Activated B cell treated with CpG ODN at 0.5 μM for 24 hours (primary cell): ENCODE measurements at regions of chr19 and their contacts with region 1.

Region 1: GRCh38 chr19:2151339-2152229 is at the start of gene AP3D1:
- DNase-seq: peak; percentile 99
- ATAC-seq: peak; percentile 92
- H3K4me3 Mint-ChIP-seq: peak within 1 kb of the TSS; percentile 83
- H3K27ac Mint-ChIP-seq: peak within 1 kb of the TSS; percentile 70
- H3K4me1 Mint-ChIP-seq: peaks cover 41% of the 10 kb centered on the region
- H3K27me3 Mint-ChIP-seq: no peaks in the 10 kb centered on the region
- CTCF ChIP-seq: no peak
- total RNA-seq, gene AP3D1: 97.2 and 109 TPM in 2 replicates

Region 2: GRCh38 chr19:1952635-1953034 is 198.9 kb before region 1 on chr19:
- CTCF ChIA-PET with region 1: no interaction called
- POLR2A ChIA-PET with region 1: no interaction called
- intact Hi-C with region 1: no loop called
- DNase-seq: no peak
- ATAC-seq: no peak
- H3K4me3 Mint-ChIP-seq: no peak overlapping the region
- H3K27ac Mint-ChIP-seq: no peak overlapping the region
- H3K4me1 Mint-ChIP-seq: peaks cover 25% of the 10 kb centered on the region
- H3K27me3 Mint-ChIP-seq: no peaks in the 10 kb centered on the region
- CTCF ChIP-seq: no peak

Region 3: GRCh38 chr19:2016041-2016807 is 135.4 kb before region 1 on chr19:
- CTCF ChIA-PET with region 1: interaction called, 5 read pairs
- POLR2A ChIA-PET with region 1: no interaction called
- intact Hi-C with region 1: loop called (anchors 1 kb)
- DNase-seq: no peak
- ATAC-seq: peak; percentile 73
- H3K4me3 Mint-ChIP-seq: peak overlapping the region; percentile 60
- H3K27ac Mint-ChIP-seq: peak overlapping the region; percentile 56
- H3K4me1 Mint-ChIP-seq: peaks cover 29% of the 10 kb centered on the region
- H3K27me3 Mint-ChIP-seq: no peaks in the 10 kb centered on the region
- CTCF ChIP-seq: no peak

Region 4: GRCh38 chr19:2168619-2169424 is 17.2 kb after region 1 on chr19:
- CTCF ChIA-PET with region 1: interaction called, 8 read pairs
- POLR2A ChIA-PET with region 1: interaction called, 8 read pairs
- intact Hi-C with region 1: loop called (anchors 1 kb)
- DNase-seq: peak; percentile 74
- ATAC-seq: peak; percentile 49
- H3K4me3 Mint-ChIP-seq: peak overlapping the region; percentile 84
- H3K27ac Mint-ChIP-seq: peak overlapping the region; percentile 92
- H3K4me1 Mint-ChIP-seq: peaks cover 84% of the 10 kb centered on the region
- H3K27me3 Mint-ChIP-seq: no peaks in the 10 kb centered on the region
- CTCF ChIP-seq: no peak

Region 5: GRCh38 chr19:2223959-2224358 is 72.4 kb after region 1 on chr19:
- CTCF ChIA-PET with region 1: interaction called, 6 read pairs
- POLR2A ChIA-PET with region 1: no interaction called
- intact Hi-C with region 1: loop called (anchors 1 kb)
- DNase-seq: peak; percentile 67
- ATAC-seq: peak; percentile 89
- H3K4me3 Mint-ChIP-seq: peak overlapping the region; percentile 48
- H3K27ac Mint-ChIP-seq: peak overlapping the region; percentile 87
- H3K4me1 Mint-ChIP-seq: peaks cover 37% of the 10 kb centered on the region
- H3K27me3 Mint-ChIP-seq: no peaks in the 10 kb centered on the region
- CTCF ChIP-seq: no peak

Region 6: DNA sequence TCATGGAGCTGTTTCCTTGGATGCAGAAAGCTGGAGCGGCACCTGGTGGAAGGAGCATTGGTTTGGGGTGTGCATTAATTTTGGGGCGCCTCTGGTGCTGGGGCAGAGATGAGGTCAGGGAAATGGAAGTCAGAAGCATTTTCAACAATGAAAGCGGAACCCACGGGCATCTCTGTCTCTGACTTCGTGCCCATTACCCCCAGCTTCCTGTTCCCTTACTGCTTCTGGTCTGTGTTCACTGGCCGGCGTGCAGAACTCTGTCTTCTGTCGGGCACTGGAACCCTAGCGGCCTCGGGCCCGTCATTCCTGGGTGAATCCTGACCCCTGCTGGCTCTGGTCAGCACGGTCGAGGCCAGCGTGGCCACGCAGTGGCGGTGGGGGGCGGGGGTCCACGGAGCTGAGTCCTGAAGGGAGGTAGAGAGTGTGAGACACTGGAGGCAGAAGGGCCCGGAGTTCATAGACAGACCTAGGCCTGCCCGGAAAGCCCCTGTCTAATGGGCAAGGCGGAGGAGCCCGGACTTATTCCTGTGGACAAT is 164.3 kb after region 1 on chr19:
- CTCF ChIA-PET with region 1: interaction called, 7 read pairs
- POLR2A ChIA-PET with region 1: no interaction called
- intact Hi-C with region 1: loop called (anchors 1 kb)
- DNase-seq: peak; percentile 54
- ATAC-seq: peak; percentile 74
- H3K4me3 Mint-ChIP-seq: peak overlapping the region; percentile 59
- H3K27ac Mint-ChIP-seq: peak overlapping the region; percentile 82
- H3K4me1 Mint-ChIP-seq: peaks cover 55% of the 10 kb centered on the region
- H3K27me3 Mint-ChIP-seq: no peaks in the 10 kb centered on the region
- CTCF ChIP-seq: no peak

Region 7: DNA sequence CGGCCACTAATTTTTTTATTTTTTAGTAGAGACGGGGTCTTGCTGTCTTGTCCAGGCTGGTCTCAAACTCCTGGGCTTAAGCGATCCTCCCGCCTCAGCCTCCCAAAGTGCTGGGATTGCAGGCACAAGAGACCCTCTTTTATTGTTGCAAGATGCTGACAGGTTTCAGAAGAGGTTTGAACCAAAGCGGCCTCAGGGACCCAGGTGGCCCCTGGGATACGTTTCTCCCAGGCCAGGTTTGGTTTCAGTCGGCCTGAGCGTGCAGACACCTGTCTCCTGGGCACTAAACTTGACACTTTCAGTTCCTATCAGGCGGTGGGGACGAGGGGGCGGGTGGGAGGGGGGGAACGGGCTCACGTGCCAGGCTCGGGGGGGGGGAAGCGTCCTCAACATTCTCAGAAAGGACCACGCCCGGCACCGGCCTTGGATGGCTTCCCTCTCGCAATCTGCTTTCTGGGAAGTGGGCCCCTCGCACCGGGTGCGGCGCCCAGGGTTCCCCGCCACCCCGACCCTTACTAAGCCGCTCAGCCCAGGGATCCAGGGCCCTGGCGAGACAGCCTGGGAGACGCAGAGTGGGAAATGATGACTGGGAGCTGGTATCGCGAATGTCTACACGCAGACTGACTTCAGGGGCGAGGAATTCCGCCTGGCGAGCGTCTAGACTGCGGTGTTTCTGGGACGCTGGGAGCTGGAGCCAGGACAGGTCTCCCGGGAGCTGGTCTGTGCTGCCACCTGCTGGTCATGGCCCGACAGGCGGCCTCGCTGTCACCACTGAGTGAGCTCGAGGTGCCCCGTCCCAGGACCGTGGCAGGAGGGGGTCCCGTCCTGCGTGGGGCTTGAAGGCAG is 459.3 kb after region 1 on chr19:
- CTCF ChIA-PET with region 1: no interaction called
- POLR2A ChIA-PET with region 1: interaction called, 12 read pairs
- intact Hi-C with region 1: no loop called
- DNase-seq: peak; percentile 89
- ATAC-seq: peak; percentile 43
- H3K4me3 Mint-ChIP-seq: peak overlapping the region; percentile 89
- H3K27ac Mint-ChIP-seq: peak overlapping the region; percentile 94
- H3K4me1 Mint-ChIP-seq: peaks cover 86% of the 10 kb centered on the region
- H3K27me3 Mint-ChIP-seq: no peaks in the 10 kb centered on the region
- CTCF ChIP-seq: peak; percentile 52

Region 8: GRCh38 chr19:2798733-2799132 is 647.1 kb after region 1 on chr19:
- CTCF ChIA-PET with region 1: no interaction called
- POLR2A ChIA-PET with region 1: no interaction called
- intact Hi-C with region 1: no loop called
- DNase-seq: no peak
- ATAC-seq: no peak
- H3K4me3 Mint-ChIP-seq: no peak overlapping the region
- H3K27ac Mint-ChIP-seq: no peak overlapping the region
- H3K4me1 Mint-ChIP-seq: no peaks in the 10 kb centered on the region
- H3K27me3 Mint-ChIP-seq: no peaks in the 10 kb centered on the region
- CTCF ChIP-seq: no peak

Region 9: GRCh38 chr19:2820112-2820702 is 668.6 kb after region 1 on chr19:
- CTCF ChIA-PET with region 1: no interaction called
- POLR2A ChIA-PET with region 1: no interaction called
- intact Hi-C with region 1: no loop called
- DNase-seq: no peak
- ATAC-seq: no peak
- H3K4me3 Mint-ChIP-seq: peak overlapping the region; percentile 83
- H3K27ac Mint-ChIP-seq: no peak overlapping the region
- H3K4me1 Mint-ChIP-seq: peaks cover 14% of the 10 kb centered on the region
- H3K27me3 Mint-ChIP-seq: no peaks in the 10 kb centered on the region
- CTCF ChIP-seq: no peak